ENCODE measurements at regions of chr16 and their contacts with region 1.

Region 1: DNA sequence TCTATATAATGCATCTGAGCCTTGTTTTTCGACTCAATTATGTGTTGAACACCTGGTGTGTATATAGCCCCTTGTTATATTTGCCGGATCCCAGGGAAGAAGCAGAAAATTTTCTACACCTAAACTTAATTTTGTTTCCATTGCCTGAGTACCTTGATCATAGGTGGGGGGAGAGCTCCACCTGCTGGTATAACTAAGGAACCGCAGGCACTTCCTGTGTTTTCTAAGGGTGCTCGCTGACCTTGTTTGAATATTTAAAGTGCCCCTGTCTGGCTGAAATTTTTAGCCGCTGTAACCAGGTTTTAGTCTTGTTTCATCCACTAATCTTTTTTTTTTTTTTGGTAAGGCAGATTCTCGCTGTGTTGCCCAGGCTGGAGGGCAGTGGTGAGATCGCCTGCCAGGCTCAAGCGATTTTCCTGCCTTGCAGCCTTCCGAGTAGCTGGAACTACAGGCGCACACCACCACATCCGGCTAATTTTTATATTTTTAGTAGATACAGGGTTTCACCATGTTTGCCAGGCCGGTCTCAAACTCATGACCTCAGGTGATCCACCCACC is 6.5 kb upstream of the NUBP1 start:
- DNase-seq: peak; percentile 65
- ATAC-seq: peak; percentile 45
- H3K4me3 ChIP-seq: peak overlapping the region; percentile 13; the same call in 1 of the 2 replicates
- H3K27ac ChIP-seq: peak overlapping the region; percentile 82
- H3K4me1 ChIP-seq: peaks cover 41% of the 10 kb centered on the region
- H3K27me3 ChIP-seq: no peaks in the 10 kb centered on the region
- CTCF ChIP-seq: peak; percentile 87 to 94 (median 90); a peak in 5 of 6 replicates
- EP300 ChIP-seq: no peak
- POLR2A ChIP-seq: no peak
- RAD21 ChIP-seq: peak; percentile 97

Region 2: DNA sequence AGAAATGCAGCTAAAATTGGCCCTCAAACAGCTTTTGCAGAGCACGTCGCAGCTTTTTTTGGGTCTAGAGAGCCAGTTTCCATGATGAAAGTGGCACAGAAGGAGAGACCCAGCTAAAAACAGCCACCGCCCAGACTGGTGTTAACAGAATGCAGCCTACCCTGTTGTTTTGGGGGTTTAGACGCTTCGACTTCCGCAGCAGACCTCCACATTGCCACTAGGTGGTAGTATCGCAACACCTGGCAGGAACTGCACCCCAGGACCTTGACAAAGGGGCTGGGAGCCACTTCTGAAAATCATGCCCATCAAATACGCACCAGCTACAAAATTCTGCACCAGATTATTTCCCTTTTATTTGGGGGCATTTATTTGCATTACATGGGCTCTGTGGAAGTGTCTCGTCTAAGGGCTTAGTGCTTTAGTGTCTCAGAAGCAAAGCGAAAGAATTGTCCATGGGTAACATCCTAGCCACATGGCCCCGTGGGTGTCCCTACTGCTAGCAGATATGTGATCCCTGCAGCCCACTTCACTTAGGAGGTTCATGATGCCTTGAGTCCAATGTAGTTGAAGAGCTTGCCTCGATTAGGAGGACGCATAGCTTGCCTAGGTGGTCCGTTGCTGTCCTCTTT is 1478.6 kb before region 1 on chr16:
- CTCF ChIA-PET with region 1: no interaction called
- POLR2A ChIA-PET with region 1: no interaction called
- RAD21 ChIA-PET with region 1: no interaction called
- SMC1A ChIA-PET with region 1: no interaction called
- in situ Hi-C with region 1: loop called (anchors 10 kb)
- intact Hi-C with region 1: no loop called
- DNase-seq: no peak
- ATAC-seq: peak; percentile 95
- H3K4me3 ChIP-seq: no peak overlapping the region
- H3K27ac ChIP-seq: no peak overlapping the region
- H3K4me1 ChIP-seq: no peaks in the 10 kb centered on the region
- H3K27me3 ChIP-seq: no peaks in the 10 kb centered on the region; a peak in 1 of 4 replicates
- CTCF ChIP-seq: peak; percentile 69 to 76 (median 71)
- EP300 ChIP-seq: no peak
- POLR2A ChIP-seq: no peak
- RAD21 ChIP-seq: peak; percentile 57

Region 3: GRCh38 chr16:10385725-10386516 is 351.2 kb before region 1 on chr16 and contains the start of gene ATF7IP2:
- CTCF ChIA-PET with region 1: interaction called, 3 read pairs
- POLR2A ChIA-PET with region 1: interaction called, 10 read pairs
- RAD21 ChIA-PET with region 1: interaction called, 3 read pairs
- SMC1A ChIA-PET with region 1: no interaction called
- in situ Hi-C with region 1: no loop called
- intact Hi-C with region 1: loop called (anchors 5 kb)
- DNase-seq: peak; percentile 80
- ATAC-seq: peak; percentile 97
- H3K4me3 ChIP-seq: peak within 1 kb of the TSS; percentile 80
- H3K27ac ChIP-seq: peak within 1 kb of the TSS; percentile 80
- H3K4me1 ChIP-seq: peaks cover 7% of the 10 kb centered on the region
- H3K27me3 ChIP-seq: no peaks in the 10 kb centered on the region
- CTCF ChIP-seq: no peak
- EP300 ChIP-seq: peak in 1 of 2 experiments; percentile 25; a peak in 1 of 4 replicates
- POLR2A ChIP-seq: peak; percentile 100
- RAD21 ChIP-seq: no peak
- polyA plus RNA-seq, gene ATF7IP2: 67.9 to 75.2 TPM

Region 4: DNA sequence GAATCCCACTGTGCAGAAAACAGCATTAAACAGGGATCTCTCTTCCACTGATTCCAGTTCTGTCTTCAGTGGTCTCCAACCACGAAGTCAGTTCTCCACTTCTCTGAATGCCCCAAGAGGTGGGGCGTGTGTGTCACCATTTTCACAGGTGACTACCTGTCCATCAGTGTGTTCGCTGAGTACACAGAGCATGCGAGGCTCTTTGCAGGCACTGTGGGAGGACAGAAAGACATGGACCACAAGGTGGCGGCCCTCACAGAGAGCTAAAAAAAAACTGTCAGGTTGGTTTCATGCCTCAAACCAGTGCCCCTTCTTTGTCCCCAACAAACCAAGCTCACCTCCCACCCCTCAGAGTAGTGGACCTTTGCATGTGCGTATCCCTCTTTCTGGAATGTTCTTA is 170.6 kb before region 1 on chr16:
- CTCF ChIA-PET with region 1: interaction called, 14 read pairs
- POLR2A ChIA-PET with region 1: no interaction called
- RAD21 ChIA-PET with region 1: interaction called, 6 read pairs
- SMC1A ChIA-PET with region 1: interaction called, 4 read pairs
- in situ Hi-C with region 1: no loop called
- intact Hi-C with region 1: no loop called
- DNase-seq: no peak
- ATAC-seq: peak; percentile 56
- H3K4me3 ChIP-seq: no peak overlapping the region
- H3K27ac ChIP-seq: no peak overlapping the region
- H3K4me1 ChIP-seq: no peaks in the 10 kb centered on the region
- H3K27me3 ChIP-seq: peaks cover 0 to 5% of the 10 kb centered on the region in 2 experiments; a peak in 1 of 4 replicates
- CTCF ChIP-seq: peak; percentile 13 to 33 (median 30); a peak in 4 of 6 replicates
- EP300 ChIP-seq: no peak
- POLR2A ChIP-seq: no peak
- RAD21 ChIP-seq: peak; percentile 31; the same call in 1 of the 2 replicates

Region 5: GRCh38 chr16:10577305-10578202 is 159.6 kb before region 1 on chr16:
- CTCF ChIA-PET with region 1: no interaction called
- POLR2A ChIA-PET with region 1: no interaction called
- RAD21 ChIA-PET with region 1: no interaction called
- SMC1A ChIA-PET with region 1: no interaction called
- in situ Hi-C with region 1: no loop called
- intact Hi-C with region 1: no loop called
- DNase-seq: no peak
- ATAC-seq: no peak
- H3K4me3 ChIP-seq: no peak overlapping the region
- H3K27ac ChIP-seq: no peak overlapping the region
- H3K4me1 ChIP-seq: no peaks in the 10 kb centered on the region; the same call in 1 of the 2 replicates
- H3K27me3 ChIP-seq: peaks cover 8 to 16% of the 10 kb centered on the region in 2 experiments
- CTCF ChIP-seq: no peak
- EP300 ChIP-seq: no peak
- POLR2A ChIP-seq: no peak
- RAD21 ChIP-seq: no peak

Region 6: DNA sequence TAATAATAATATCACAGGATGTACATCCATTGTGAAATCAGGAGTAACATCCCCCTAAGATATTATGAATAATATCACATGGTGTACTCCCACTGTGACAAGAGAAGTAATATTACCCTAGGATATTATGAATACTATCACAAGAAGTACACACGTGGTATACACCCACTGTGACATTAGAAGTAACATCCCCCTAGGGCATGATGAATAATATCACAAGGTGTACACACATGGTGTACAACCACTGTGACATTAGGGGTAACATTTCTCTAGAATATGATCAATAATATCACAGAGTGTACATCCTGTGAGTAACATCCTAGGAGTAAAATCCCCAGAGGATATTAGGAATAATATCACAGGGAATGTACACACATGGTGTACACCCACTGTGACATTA is 37.4 kb before region 1 on chr16:
- CTCF ChIA-PET with region 1: no interaction called
- POLR2A ChIA-PET with region 1: no interaction called
- RAD21 ChIA-PET with region 1: no interaction called
- SMC1A ChIA-PET with region 1: no interaction called
- in situ Hi-C with region 1: no loop called
- intact Hi-C with region 1: no loop called
- DNase-seq: no peak
- ATAC-seq: no peak
- H3K4me3 ChIP-seq: no peak overlapping the region
- H3K27ac ChIP-seq: no peak overlapping the region
- H3K4me1 ChIP-seq: no peaks in the 10 kb centered on the region
- H3K27me3 ChIP-seq: no peaks in the 10 kb centered on the region
- CTCF ChIP-seq: no peak
- EP300 ChIP-seq: no peak
- POLR2A ChIP-seq: no peak
- RAD21 ChIP-seq: no peak

Region 7: GRCh38 chr16:10817963-10818941 is 81.1 kb after region 1 on chr16 and contains the start of gene TVP23A:
- CTCF ChIA-PET with region 1: interaction called, 4 read pairs
- POLR2A ChIA-PET with region 1: interaction called, 3 read pairs
- RAD21 ChIA-PET with region 1: interaction called, 26 read pairs
- SMC1A ChIA-PET with region 1: interaction called, 7 read pairs
- in situ Hi-C with region 1: no loop called
- intact Hi-C with region 1: loop called (anchors 2 kb)
- DNase-seq: no peak
- ATAC-seq: no peak
- H3K4me3 ChIP-seq: no peak within 1 kb of the TSS
- H3K27ac ChIP-seq: peak within 1 kb of the TSS; percentile 38; the same call in 1 of the 2 replicates
- H3K4me1 ChIP-seq: peaks cover 37% of the 10 kb centered on the region
- H3K27me3 ChIP-seq: no peaks in the 10 kb centered on the region
- CTCF ChIP-seq: no peak
- EP300 ChIP-seq: no peak
- POLR2A ChIP-seq: no peak
- RAD21 ChIP-seq: no peak
- polyA plus RNA-seq, gene TVP23A: 4.6 to 6.4 TPM

Region 8: DNA sequence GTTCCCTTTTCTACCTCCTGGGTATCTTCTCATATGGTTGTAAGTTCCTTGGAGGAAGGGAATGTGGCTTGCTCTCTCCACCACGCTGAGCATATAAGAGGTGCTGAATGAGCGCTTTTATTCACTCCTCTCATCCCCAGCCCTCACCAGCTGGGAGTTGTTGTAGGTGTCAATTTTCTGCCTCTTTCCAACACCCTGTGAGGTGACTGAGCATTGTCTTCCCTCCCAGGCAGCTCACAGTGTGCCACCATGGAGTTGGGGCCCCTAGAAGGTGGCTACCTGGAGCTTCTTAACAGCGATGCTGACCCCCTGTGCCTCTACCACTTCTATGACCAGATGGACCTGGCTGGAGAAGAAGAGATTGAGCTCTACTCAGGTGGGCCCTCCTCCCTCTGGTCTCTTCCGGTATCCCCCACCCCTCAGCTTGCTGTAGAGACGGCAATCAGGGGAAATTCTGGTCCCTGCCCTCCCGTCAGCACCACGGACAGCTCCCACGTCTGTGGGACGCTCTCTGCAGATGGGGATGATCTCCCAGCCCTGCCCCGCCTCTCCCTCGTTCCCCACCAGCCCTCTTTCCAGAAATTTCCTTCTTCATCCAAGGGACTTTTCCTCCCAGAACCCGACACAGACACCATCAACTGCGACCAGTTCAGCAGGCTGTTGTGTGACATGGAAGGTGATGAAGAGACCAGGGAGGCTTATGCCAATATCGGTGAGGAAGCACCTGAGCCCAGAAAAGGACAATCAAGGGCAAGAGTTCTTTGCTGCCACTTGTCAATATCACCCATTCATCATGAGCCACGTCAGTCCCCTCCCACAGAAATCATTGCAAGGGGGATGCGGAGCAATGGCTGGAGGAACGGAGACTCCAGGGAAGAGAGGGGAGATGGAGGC is 158.2 kb after region 1 on chr16:
- CTCF ChIA-PET with region 1: interaction called, 12 read pairs
- POLR2A ChIA-PET with region 1: interaction called, 8 read pairs
- RAD21 ChIA-PET with region 1: interaction called, 31 read pairs
- SMC1A ChIA-PET with region 1: interaction called, 38 read pairs
- in situ Hi-C with region 1: no loop called
- intact Hi-C with region 1: no loop called
- DNase-seq: no peak
- ATAC-seq: no peak
- H3K4me3 ChIP-seq: no peak overlapping the region
- H3K27ac ChIP-seq: no peak overlapping the region
- H3K4me1 ChIP-seq: peaks cover 68% of the 10 kb centered on the region
- H3K27me3 ChIP-seq: no peaks in the 10 kb centered on the region
- CTCF ChIP-seq: no peak
- EP300 ChIP-seq: no peak
- POLR2A ChIP-seq: no peak
- RAD21 ChIP-seq: no peak

Region 9: GRCh38 chr16:10949370-10949970 is 212.3 kb after region 1 on chr16:
- CTCF ChIA-PET with region 1: interaction called, 5 read pairs
- POLR2A ChIA-PET with region 1: no interaction called
- RAD21 ChIA-PET with region 1: interaction called, 6 read pairs
- SMC1A ChIA-PET with region 1: interaction called, 14 read pairs
- in situ Hi-C with region 1: no loop called
- intact Hi-C with region 1: no loop called
- DNase-seq: peak; percentile 91
- ATAC-seq: peak; percentile 83
- H3K4me3 ChIP-seq: peak overlapping the region; percentile 28; the same call in 1 of the 2 replicates
- H3K27ac ChIP-seq: peak overlapping the region; percentile 62
- H3K4me1 ChIP-seq: peaks cover 27% of the 10 kb centered on the region
- H3K27me3 ChIP-seq: no peaks in the 10 kb centered on the region
- CTCF ChIP-seq: peak; percentile 34 to 55 (median 49); a peak in 2 of 6 replicates
- EP300 ChIP-seq: peak; percentile 9 to 33; a peak in 1 of 4 replicates
- POLR2A ChIP-seq: no peak
- RAD21 ChIP-seq: no peak

Measured in GM12878 (cell line).